ENCODE measurements at regions of chr15 and their contacts with region 1.

Region 1: GRCh38 chr15:79339564-79340314 is 28.8 kb downstream of the TMED3 start:
- DNase-seq: peak; percentile 8
- H3K4me3 ChIP-seq: no peak overlapping the region
- H3K27ac ChIP-seq: no peak overlapping the region
- H3K4me1 ChIP-seq: no peaks in the 10 kb centered on the region
- H3K27me3 ChIP-seq: no peaks in the 10 kb centered on the region
- CTCF ChIP-seq: peak; percentile 92 to 95

Region 2: GRCh38 chr15:79380755-79381497 is 41.2 kb after region 1 on chr15:
- CTCF ChIA-PET with region 1: no interaction called
- dilution Hi-C with region 1: loop called (anchors 5 kb)
- in situ Hi-C with region 1: no loop called
- intact Hi-C with region 1: no loop called
- DNase-seq: peak; percentile 42
- H3K4me3 ChIP-seq: no peak overlapping the region
- H3K27ac ChIP-seq: no peak overlapping the region
- H3K4me1 ChIP-seq: no peaks in the 10 kb centered on the region
- H3K27me3 ChIP-seq: no peaks in the 10 kb centered on the region
- CTCF ChIP-seq: peak; percentile 88 to 95

Region 3: GRCh38 chr15:79394231-79394630 is 54.5 kb after region 1 on chr15:
- CTCF ChIA-PET with region 1: no interaction called
- dilution Hi-C with region 1: no loop called
- in situ Hi-C with region 1: no loop called
- intact Hi-C with region 1: no loop called
- DNase-seq: no peak
- H3K4me3 ChIP-seq: no peak overlapping the region
- H3K27ac ChIP-seq: no peak overlapping the region
- H3K4me1 ChIP-seq: no peaks in the 10 kb centered on the region
- H3K27me3 ChIP-seq: no peaks in the 10 kb centered on the region
- CTCF ChIP-seq: no peak

Region 4: GRCh38 chr15:79431636-79432344 is 92.1 kb after region 1 on chr15 and contains the start of gene MINAR1:
- CTCF ChIA-PET with region 1: no interaction called
- dilution Hi-C with region 1: no loop called
- in situ Hi-C with region 1: no loop called
- intact Hi-C with region 1: no loop called
- DNase-seq: peak; percentile 43
- H3K4me3 ChIP-seq: peak within 1 kb of the TSS; percentile 12 to 44 (median 30)
- H3K27ac ChIP-seq: no peak within 1 kb of the TSS
- H3K4me1 ChIP-seq: peaks cover 12% of the 10 kb centered on the region
- H3K27me3 ChIP-seq: peaks cover 37% of the 10 kb centered on the region
- CTCF ChIP-seq: no peak
- total RNA-seq, gene MINAR1: 0.12 to 0.50 TPM

Region 5: GRCh38 chr15:79442911-79443310 is 103.2 kb after region 1 on chr15:
- CTCF ChIA-PET with region 1: no interaction called
- dilution Hi-C with region 1: no loop called
- in situ Hi-C with region 1: no loop called
- intact Hi-C with region 1: no loop called
- DNase-seq: no peak
- H3K4me3 ChIP-seq: no peak overlapping the region
- H3K27ac ChIP-seq: no peak overlapping the region
- H3K4me1 ChIP-seq: no peaks in the 10 kb centered on the region
- H3K27me3 ChIP-seq: no peaks in the 10 kb centered on the region
- CTCF ChIP-seq: no peak

Region 6: GRCh38 chr15:79978655-79979514 is 639.1 kb after region 1 on chr15:
- CTCF ChIA-PET with region 1: no interaction called
- dilution Hi-C with region 1: no loop called
- in situ Hi-C with region 1: loop called in 1 of 2 experiments (anchors 25 kb)
- intact Hi-C with region 1: no loop called
- DNase-seq: peak; percentile 64
- H3K4me3 ChIP-seq: no peak overlapping the region
- H3K27ac ChIP-seq: no peak overlapping the region
- H3K4me1 ChIP-seq: peaks cover 8% of the 10 kb centered on the region
- H3K27me3 ChIP-seq: no peaks in the 10 kb centered on the region
- CTCF ChIP-seq: no peak

Measured in mammary epithelial cell (primary cell).